Lower lobe of right lung (tissue), 2 donors: ENCODE measurements at regions of chr1 and their contacts with region 1.

Region 1: DNA sequence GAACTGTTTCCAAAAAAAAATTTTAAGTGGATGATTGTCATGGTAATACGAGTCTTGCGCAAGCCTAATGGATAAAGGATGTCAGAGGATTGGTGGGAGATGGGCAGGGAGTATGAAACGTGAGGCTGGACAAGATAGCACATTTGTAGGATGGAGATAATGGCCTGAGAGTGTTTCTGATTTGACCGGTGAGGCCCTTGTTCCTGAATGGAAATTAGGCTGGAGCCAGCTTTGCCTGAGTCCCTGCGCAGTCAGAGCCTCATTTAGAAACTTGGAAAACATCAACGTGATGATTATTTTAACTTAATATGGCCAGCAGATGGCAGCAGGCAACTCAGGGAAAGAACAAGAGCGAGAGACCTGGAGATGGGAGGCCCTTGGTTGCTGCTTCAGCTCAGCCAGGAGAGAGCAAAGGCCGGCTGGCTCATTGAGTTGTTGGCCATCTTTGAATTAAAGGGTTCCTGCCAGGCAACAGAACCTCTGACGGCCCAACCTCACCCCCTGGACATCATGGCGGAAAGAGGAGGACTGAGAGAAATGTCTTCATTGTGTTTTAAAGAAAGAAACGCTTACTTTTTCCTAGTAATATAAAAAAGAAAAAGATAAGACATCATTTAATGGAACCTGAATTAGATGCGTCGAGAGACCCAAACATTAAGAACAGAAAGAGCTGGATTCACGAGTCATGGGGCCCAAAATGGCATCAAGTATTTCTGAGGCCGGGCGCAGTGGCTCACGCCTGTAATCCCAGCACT is 80.3 kb downstream of the SELENOF start:
- DNase-seq: peak; percentile 62
- ATAC-seq: peak; percentile 89 to 93
- H3K4me3 ChIP-seq: no peak overlapping the region
- H3K27ac ChIP-seq: no peak overlapping the region
- H3K4me1 ChIP-seq: no peaks in the 10 kb centered on the region
- H3K27me3 ChIP-seq: no peaks in the 10 kb centered on the region
- CTCF ChIP-seq: peak; percentile 56

Region 2: GRCh38 chr1:87084244-87084836 is 250.7 kb after region 1 on chr1:
- intact Hi-C with region 1: loop called (anchors 10 kb)
- DNase-seq: no peak
- ATAC-seq: peak; percentile 42 to 55
- H3K4me3 ChIP-seq: no peak overlapping the region
- H3K27ac ChIP-seq: no peak overlapping the region
- H3K4me1 ChIP-seq: no peaks in the 10 kb centered on the region
- H3K27me3 ChIP-seq: no peaks in the 10 kb centered on the region
- CTCF ChIP-seq: peak; percentile 58